ENCODE measurements at regions of chr7 and their contacts with region 1.

Region 1: DNA sequence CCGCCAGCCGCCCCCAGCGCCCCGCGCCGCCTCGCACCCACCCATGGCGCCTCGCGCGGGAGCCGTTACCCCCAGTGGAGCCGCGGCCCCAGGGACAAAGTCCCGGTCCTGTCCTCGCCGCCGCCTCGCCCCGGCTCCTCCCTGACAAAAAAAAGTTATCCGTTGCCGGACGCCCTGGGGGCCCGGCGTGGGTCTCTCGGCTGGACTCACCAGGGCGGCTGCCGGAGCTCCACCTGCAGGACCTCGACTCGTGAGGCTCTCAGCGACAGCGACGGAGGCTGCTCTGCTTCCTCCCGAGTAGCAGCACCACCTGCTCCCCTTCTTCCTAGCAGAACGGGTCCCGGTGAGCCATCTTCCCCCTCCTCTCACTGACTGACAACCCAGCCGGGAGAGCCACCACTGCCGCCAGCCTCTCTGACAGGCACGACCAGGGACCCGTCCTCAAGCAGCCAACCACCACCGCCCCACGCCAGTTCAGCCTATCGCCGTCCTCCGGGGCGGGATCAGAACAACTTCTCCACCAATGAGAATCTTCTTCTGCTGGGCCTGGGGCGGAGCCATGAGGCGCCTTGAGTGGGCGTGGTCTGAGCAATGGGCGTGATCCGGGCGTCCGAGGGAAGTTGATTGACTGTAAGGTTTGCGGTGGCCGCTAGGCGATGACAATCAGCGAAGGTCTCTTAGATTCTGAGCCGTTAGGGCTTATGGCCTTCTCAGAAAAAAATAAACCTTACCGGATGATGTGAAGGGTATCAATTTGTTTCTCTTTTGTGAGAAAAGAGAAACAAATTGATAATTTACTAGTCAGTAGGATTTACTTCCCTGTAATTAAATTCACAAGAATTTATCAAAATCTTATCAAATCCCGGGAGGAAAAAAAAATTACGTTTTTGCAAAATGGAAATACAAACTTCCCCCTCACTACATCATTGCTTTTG is at the start of gene HYCC1:
- DNase-seq: peak; percentile 98 to 100
- H3K4me3 ChIP-seq: peak within 1 kb of the TSS; percentile 58
- H3K27ac ChIP-seq: no peak within 1 kb of the TSS
- H3K4me1 ChIP-seq: peaks cover 11% of the 10 kb centered on the region
- H3K27me3 ChIP-seq: no peaks in the 10 kb centered on the region
- CTCF ChIP-seq: peak; percentile 68
- total RNA-seq, gene HYCC1: 25.1 and 28.2 TPM in 2 replicates

Region 2: GRCh38 chr7:22732556-22733126 is 281.3 kb before region 1 on chr7:
- CTCF ChIA-PET with region 1: interaction called, 3 read pairs
- POLR2A ChIA-PET with region 1: interaction called, 3 read pairs
- intact Hi-C with region 1: loop called (anchors 5 kb)
- DNase-seq: peak; percentile 33 to 70
- H3K4me3 ChIP-seq: no peak overlapping the region
- H3K27ac ChIP-seq: no peak overlapping the region
- H3K4me1 ChIP-seq: peaks cover 35% of the 10 kb centered on the region
- H3K27me3 ChIP-seq: no peaks in the 10 kb centered on the region
- CTCF ChIP-seq: peak; percentile 86

Region 3: GRCh38 chr7:22822486-22823141 is 191.4 kb before region 1 on chr7 and contains the start of gene TOMM7:
- CTCF ChIA-PET with region 1: no interaction called
- POLR2A ChIA-PET with region 1: interaction called, 11 read pairs
- intact Hi-C with region 1: loop called (anchors 1 kb)
- DNase-seq: peak; percentile 90 to 94
- H3K4me3 ChIP-seq: peak within 1 kb of the TSS; percentile 99
- H3K27ac ChIP-seq: peak within 1 kb of the TSS; percentile 33
- H3K4me1 ChIP-seq: peaks cover 29% of the 10 kb centered on the region
- H3K27me3 ChIP-seq: no peaks in the 10 kb centered on the region
- CTCF ChIP-seq: peak; percentile 65
- total RNA-seq, gene TOMM7: 588 and 703 TPM in 2 replicates

Region 4: GRCh38 chr7:22896917-22897316 is 117.1 kb before region 1 on chr7:
- CTCF ChIA-PET with region 1: no interaction called
- POLR2A ChIA-PET with region 1: no interaction called
- intact Hi-C with region 1: no loop called
- DNase-seq: no peak
- H3K4me3 ChIP-seq: no peak overlapping the region
- H3K27ac ChIP-seq: no peak overlapping the region
- H3K4me1 ChIP-seq: no peaks in the 10 kb centered on the region
- H3K27me3 ChIP-seq: no peaks in the 10 kb centered on the region
- CTCF ChIP-seq: no peak

Region 5: GRCh38 chr7:22920672-22921071 is 93.3 kb before region 1 on chr7:
- CTCF ChIA-PET with region 1: no interaction called
- POLR2A ChIA-PET with region 1: no interaction called
- intact Hi-C with region 1: no loop called
- DNase-seq: no peak
- H3K4me3 ChIP-seq: no peak overlapping the region
- H3K27ac ChIP-seq: no peak overlapping the region
- H3K4me1 ChIP-seq: no peaks in the 10 kb centered on the region; the same call in 1 of the 2 replicates
- H3K27me3 ChIP-seq: no peaks in the 10 kb centered on the region
- CTCF ChIP-seq: no peak

Measured in PC-9 (cell line).